ENCODE measurements at regions of chr10 and their contacts with region 1.

Region 1: DNA sequence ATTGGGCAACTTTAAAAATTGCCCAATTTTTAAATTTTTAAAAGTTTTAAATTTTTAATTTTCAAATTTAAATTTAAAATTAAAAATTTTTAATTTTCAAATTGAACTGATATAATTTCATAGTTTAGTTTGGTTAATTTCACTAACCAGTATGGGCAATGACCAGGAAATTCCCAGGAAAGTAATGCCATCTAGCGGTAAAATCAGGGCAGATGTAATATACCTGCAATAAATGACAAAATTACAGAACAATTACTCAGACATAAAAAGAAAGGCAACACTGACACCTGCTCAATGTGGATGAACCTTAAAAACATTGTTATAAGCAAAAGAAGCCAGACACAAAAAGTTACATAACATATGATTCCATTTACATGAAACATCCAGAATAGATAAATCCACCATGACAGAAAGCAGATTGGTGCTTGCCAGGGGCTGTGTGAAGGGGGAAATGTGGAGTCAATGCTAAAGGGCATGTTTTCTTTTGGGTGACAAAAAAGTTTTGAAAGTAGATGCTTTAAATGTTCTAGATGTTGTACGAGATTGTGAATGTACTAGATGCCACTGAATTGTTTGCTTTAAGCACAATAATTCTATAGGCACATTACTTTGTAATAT is 28.6 kb upstream of the SLC16A12 start:
- DNase-seq: no peak
- ATAC-seq: peak; percentile 62 to 90 (median 74)
- H3K4me3 ChIP-seq: no peak overlapping the region
- H3K27ac ChIP-seq: no peak overlapping the region
- H3K4me1 ChIP-seq: no peaks in the 10 kb centered on the region
- H3K27me3 ChIP-seq: no peaks in the 10 kb centered on the region
- CTCF ChIP-seq: peak; percentile 86

Region 2: DNA sequence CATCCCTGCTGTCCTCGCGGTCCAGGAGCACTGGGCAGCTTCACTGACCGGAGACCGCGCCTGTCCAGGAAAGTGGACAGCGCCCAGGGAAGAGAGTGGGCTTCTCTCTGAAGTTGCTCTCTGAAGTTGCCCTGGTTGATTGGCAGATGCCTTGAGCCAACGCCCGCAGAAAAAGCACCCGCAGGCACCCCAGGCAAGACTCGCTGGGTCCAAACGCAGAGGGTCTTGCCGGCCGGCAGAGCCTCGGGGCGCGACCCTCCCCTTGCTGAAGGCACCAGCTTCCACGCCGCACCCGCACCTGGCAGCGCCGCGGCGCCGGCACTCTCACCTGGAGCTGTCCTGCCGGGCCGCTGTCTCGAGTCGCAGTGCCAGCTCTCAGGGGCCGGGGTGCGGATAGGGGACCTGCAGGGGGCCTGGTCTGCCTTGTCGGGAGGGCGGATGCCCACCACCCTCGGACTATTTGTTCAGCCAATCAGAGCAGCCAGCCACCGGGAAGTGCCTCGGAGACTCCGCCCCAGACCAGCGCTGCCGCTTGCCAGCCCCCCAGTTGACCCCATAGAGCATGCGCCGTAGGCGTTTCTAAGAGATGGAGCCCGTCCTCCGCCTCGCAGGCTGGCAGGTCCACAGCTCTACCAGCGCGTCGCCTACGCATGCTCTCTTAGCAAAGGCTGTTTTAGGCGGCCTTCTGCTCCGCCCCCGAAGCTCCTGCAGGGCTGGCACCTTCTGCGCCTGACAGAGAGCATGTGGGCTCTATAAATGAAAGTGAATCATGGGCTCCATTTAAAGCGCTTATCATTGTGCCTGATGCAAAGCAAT is 312.4 kb before region 1 on chr10 and contains the start of gene LIPA:
- intact Hi-C with region 1: loop called in 1 of 2 experiments (anchors 1 kb)
- DNase-seq: peak; percentile 96 to 97
- ATAC-seq: peak; percentile 99 to 100 (median 99)
- H3K4me3 ChIP-seq: peak within 1 kb of the TSS; percentile 99
- H3K27ac ChIP-seq: peak within 1 kb of the TSS; percentile 82
- H3K4me1 ChIP-seq: peaks cover 9% of the 10 kb centered on the region
- H3K27me3 ChIP-seq: no peaks in the 10 kb centered on the region
- CTCF ChIP-seq: no peak
- total RNA-seq, gene LIPA: 7.7 to 14.2 (median 12.3) TPM

Region 3: DNA sequence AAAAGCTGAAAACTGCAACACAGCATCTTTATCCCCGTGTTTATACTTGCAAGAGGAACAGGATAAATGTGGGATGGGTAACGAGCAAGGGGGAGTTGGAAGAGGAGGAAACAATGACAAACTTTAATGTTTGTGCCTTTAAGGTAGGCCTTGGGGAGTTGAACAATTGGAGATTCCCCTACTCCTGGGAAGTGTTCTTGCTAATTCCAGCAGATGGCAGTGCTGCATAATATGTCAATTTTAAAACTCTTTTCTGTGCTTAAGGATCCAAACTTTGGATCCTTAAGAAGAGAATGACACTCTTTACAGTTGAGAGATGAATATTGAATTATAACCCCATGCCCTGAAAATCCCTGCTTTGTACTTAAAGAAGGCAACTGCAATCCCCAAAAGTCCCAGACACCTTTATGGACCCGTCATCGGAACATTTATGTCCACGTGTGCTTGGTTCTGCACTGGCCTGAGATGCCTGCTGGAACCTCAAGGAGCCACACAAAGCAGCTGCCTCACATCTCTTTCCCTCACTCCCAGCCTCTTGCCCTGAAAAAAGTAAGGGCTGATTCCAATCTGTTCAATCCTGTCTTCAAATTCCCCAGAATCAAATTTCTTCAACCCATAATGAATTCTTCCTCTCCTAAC is 137.6 kb before region 1 on chr10:
- intact Hi-C with region 1: loop called (anchors 1 to 2 kb)
- DNase-seq: no peak
- ATAC-seq: peak; percentile 71 to 87 (median 78)
- H3K4me3 ChIP-seq: no peak overlapping the region
- H3K27ac ChIP-seq: no peak overlapping the region
- H3K4me1 ChIP-seq: peaks cover 23% of the 10 kb centered on the region
- H3K27me3 ChIP-seq: no peaks in the 10 kb centered on the region
- CTCF ChIP-seq: peak; percentile 87